Naive thymus-derived CD8-positive, alpha-beta T cell (primary cell): ENCODE measurements at regions of chr5 and their contacts with region 1.

Region 1: GRCh38 chr5:43066799-43067741 is 27.0 kb upstream of the ANXA2R start:
- DNase-seq: peak; percentile 72 to 99 (median 91)
- ATAC-seq: peak; percentile 42 to 53
- H3K4me3 Mint-ChIP-seq: peak overlapping the region; percentile 94 to 99 (median 98)
- H3K27ac Mint-ChIP-seq: peak overlapping the region; percentile 95 to 100 (median 100)
- H3K4me1 Mint-ChIP-seq: peaks cover 24 to 61% (median 55%) of the 10 kb centered on the region in 4 donors
- H3K27me3 Mint-ChIP-seq: no peaks in the 10 kb centered on the region

Region 2: GRCh38 chr5:42950440-42951292 is 116.4 kb before region 1 on chr5:
- POLR2A ChIA-PET with region 1: interaction called, 106 read pairs
- DNase-seq: peak in 8 of 10 donors; percentile 27 to 72 (median 54)
- ATAC-seq: peak; percentile 8 to 37
- H3K4me3 Mint-ChIP-seq: peak overlapping the region; percentile 91 to 99 (median 96)
- H3K27ac Mint-ChIP-seq: peak overlapping the region; percentile 99 to 100 (median 100)
- H3K4me1 Mint-ChIP-seq: peaks cover 13 to 36% (median 26%) of the 10 kb centered on the region in 4 donors
- H3K27me3 Mint-ChIP-seq: no peaks in the 10 kb centered on the region

Region 3: DNA sequence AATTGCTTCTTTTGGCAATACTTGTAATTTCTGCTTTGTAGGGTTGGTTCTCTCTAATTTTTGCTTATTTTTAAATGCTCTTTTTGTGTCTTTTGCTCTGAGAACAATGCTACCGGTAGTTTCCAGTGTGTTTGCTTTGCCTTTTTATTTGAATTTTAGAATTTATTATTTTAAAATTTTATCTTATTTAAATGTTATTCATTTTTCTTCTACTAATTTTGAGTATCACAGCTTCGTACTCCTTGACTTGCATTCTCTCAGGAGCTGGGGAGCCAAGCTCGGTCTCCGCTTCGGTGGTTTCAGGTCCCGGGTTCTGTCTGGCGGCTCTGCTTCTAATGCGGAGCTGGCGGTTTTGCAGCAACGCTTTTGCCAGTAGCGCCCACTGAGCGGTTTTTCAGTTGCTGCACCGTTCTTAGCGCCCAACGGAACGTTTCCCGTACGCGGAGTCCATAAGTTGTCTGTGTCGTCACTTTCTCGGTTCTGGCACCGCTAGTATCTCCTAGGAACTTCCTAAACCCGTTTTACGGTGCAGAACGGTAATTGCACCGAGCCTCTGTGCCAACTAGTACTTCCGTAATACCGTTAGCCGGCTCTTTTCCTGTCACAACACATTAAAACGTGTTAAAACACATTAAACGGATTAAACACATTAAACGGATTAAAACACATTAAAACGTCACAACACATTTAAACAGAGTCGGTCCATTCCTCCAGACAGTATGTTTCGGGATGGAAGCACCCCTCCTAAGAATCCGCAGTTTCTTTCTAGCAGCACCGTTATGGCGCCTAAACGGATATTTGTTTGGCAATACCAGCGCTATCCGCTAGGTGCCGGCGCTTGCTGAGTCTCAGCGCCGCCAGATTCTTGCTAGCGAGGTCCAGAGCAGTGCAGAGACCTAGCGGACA is 72.6 kb before region 1 on chr5:
- POLR2A ChIA-PET with region 1: interaction called, 266 read pairs
- DNase-seq: peak; percentile 71 to 93 (median 87)
- ATAC-seq: peak; percentile 56 to 63
- H3K4me3 Mint-ChIP-seq: peak overlapping the region; percentile 87 to 100 (median 100)
- H3K27ac Mint-ChIP-seq: peak overlapping the region; percentile 97 to 100 (median 100)
- H3K4me1 Mint-ChIP-seq: peaks cover 12 to 38% (median 31%) of the 10 kb centered on the region in 4 donors
- H3K27me3 Mint-ChIP-seq: no peaks in the 10 kb centered on the region

Region 4: DNA sequence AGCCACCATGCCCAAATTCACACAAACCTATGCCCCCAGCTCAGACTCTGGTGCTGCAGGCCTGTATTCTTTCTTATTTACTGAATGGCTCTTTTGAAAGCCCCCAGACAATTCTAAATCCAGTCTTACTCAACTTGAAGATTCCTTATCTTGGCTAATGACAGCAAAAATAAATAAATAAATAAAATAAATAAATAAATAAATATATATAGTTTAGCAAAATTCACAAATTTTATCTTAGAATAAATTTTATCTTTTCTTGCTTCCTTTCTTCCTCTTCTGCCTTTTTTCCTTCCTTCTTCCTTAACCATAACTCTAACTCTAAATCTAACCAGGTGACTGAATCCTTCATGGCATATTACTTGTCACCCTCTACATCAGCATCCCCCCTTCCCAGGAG is 52.5 kb before region 1 on chr5:
- POLR2A ChIA-PET with region 1: interaction called, 271 read pairs
- DNase-seq: no peak
- ATAC-seq: no peak
- H3K4me3 Mint-ChIP-seq: peak overlapping the region in 4 of 10 donors; percentile 20 to 99 (median 98)
- H3K27ac Mint-ChIP-seq: peak overlapping the region in 9 of 10 donors; percentile 34 to 100 (median 79)
- H3K4me1 Mint-ChIP-seq: peaks cover 29 to 60% (median 50%) of the 10 kb centered on the region in 4 donors
- H3K27me3 Mint-ChIP-seq: no peaks in the 10 kb centered on the region

Region 5: DNA sequence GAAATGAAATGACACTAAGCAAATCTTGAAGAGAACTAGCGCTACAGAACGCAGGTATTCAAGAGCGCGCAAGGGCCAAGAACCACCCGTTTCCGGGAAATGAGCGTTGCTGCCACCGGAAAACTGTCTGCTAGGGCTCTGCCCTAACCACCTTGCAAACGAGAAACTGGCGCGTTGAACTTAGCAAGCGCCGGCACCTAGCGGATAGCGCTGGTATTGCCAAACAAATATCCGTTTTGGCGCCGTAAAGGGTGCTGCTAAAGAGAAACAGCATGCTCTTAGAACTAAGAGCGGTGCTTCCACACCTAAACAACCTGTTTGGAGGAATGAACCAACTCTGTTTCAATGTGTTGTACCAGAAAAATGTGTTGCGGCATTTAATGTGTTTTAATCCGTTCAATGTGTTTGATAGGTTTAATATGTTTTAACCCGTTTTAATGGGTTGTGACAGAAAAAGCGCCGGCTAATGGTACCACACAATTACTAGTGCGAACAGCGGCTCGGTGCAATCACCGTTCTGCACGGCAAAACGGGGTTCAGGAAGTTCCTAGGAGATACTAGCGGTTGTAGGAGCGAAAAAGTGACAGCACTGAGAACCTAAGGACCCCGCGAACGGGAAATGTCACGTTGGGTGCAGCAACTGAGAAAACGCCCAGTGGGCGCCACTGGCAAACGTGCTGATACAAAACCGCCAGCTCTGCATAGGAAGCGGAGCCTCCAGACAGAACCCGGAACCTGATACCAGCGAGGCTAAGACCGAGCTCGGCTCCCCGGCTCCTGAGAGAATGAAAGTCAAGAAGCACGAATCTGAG is 26.6 kb before region 1 on chr5 and contains the start of gene ANXA2R:
- POLR2A ChIA-PET with region 1: interaction called, 619 read pairs
- DNase-seq: peak; percentile 78 to 98 (median 95)
- ATAC-seq: peak; percentile 51 to 56
- H3K4me3 Mint-ChIP-seq: peak within 1 kb of the TSS; percentile 95 to 100 (median 98)
- H3K27ac Mint-ChIP-seq: peak within 1 kb of the TSS; percentile 96 to 100 (median 99)
- H3K4me1 Mint-ChIP-seq: peaks cover 19 to 61% (median 52%) of the 10 kb centered on the region in 4 donors
- H3K27me3 Mint-ChIP-seq: no peaks in the 10 kb centered on the region
- polyA plus RNA-seq, gene ANXA2R: 51.5 to 69.8 (median 54.8) TPM

Region 6: GRCh38 chr5:43110606-43111442 is 43.8 kb after region 1 on chr5:
- POLR2A ChIA-PET with region 1: interaction called, 34 read pairs
- DNase-seq: peak in 7 of 10 donors; percentile 19 to 64 (median 34)
- ATAC-seq: peak; percentile 80 to 85
- H3K4me3 Mint-ChIP-seq: peak overlapping the region; percentile 50 to 80 (median 62)
- H3K27ac Mint-ChIP-seq: peak overlapping the region; percentile 83 to 95 (median 88)
- H3K4me1 Mint-ChIP-seq: peaks cover 11 to 34% (median 28%) of the 10 kb centered on the region in 4 donors
- H3K27me3 Mint-ChIP-seq: no peaks in the 10 kb centered on the region

Region 7: GRCh38 chr5:43313035-43313853 is 246.2 kb after region 1 on chr5 and contains the start of gene HMGCS1:
- POLR2A ChIA-PET with region 1: interaction called, 38 read pairs
- DNase-seq: peak; percentile 94 to 100 (median 99)
- ATAC-seq: peak; percentile 90 to 92
- H3K4me3 Mint-ChIP-seq: peak within 1 kb of the TSS; percentile 90 to 99 (median 97)
- H3K27ac Mint-ChIP-seq: peak within 1 kb of the TSS; percentile 90 to 99 (median 96)
- H3K4me1 Mint-ChIP-seq: peaks cover 22 to 40% (median 34%) of the 10 kb centered on the region in 4 donors
- H3K27me3 Mint-ChIP-seq: peaks cover 0 to 2% (median 0%) of the 10 kb centered on the region in 5 donors
- polyA plus RNA-seq, gene HMGCS1: 4.0 to 11.6 (median 4.2) TPM